Ascending aorta (tissue), 2 donors: ENCODE measurements at regions of chr20 and their contacts with region 1.

Region 1: DNA sequence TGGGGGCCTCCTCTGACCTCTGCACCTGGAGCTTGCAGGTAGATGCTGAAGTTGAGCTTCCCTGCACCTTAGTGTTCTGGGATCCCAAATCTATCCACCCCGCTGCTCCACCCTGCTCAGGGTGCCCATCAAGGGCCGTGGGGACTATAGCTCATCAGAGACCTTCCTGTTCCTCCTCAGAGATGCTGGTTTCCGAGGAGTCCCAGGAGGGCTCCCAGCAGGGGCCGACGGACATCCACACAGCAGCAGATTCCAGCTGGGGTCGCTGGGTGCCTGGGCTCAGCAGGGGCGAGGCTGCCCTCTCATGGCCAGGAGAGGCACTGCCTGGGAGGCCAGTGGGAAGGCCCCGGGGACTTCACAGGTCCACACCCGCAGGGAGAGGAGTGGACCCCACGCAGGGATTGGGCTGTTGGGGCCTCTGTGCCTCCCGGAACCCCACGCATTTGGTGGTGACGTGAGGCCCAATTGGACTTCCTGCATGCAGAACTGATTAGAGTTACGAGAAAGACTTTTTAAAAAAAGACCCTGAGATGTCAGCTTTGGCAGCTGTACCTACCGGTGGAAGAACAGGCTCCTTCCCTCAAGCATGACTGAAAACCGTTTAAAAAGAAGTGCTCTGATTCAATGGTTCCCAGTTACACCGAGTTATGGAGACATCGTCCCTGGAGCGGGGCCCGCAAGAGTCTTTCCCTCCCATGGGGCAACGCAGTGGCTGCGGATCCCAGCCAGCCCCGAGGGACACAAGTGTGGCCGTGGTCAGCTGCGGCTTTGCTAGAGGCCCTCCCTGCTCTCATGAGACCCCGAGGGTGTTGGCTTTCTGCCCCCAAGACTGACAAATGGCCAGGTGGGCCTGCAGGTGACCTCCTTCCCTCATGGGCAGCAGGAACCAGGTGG is 25.3 kb upstream of the SLCO4A1 start:
- DNase-seq: peak; percentile 57 to 83
- H3K4me3 ChIP-seq: no peak overlapping the region
- H3K27ac ChIP-seq: peak overlapping the region; percentile 58 to 68
- H3K4me1 ChIP-seq: no peaks in the 10 kb centered on the region
- H3K27me3 ChIP-seq: no peaks in the 10 kb centered on the region
- CTCF ChIP-seq: peak; percentile 83 to 96 (median 95)

Region 2: DNA sequence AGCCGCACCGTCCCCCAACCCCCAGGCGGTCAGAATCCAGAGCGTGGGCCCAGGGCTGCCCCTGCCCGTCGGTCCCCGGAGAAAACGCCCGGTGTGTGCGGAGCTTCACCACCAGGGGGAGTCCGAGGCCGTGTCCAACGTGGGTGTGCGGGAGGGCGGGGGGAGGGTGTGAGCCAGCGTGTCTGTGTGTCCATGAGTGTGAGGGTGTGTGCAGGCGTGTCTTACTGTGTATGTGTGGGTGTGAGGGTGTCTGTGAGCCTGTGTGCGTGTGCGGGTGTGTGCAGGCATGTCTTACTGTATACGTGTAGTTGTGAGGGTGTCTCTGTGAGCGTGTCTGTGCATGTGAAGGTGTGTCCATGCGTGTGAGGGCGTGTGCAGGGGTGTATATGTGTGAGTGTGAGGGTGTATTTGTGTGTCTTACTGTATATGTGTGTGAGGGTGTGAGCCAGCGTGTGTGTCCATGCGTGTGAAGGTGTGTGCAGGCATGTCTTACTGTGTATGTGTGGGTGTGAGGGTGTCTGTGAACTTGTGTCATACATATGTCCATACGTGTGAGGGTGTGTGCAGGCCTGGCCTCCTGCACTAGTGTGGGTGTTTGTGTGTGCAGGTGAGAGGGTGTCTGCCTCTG is 116.6 kb before region 1 on chr20:
- intact Hi-C with region 1: loop called (anchors 1 kb)
- DNase-seq: peak in 1 of 2 donors; percentile 80
- H3K4me3 ChIP-seq: no peak overlapping the region
- H3K27ac ChIP-seq: no peak overlapping the region
- H3K4me1 ChIP-seq: no peaks in the 10 kb centered on the region
- H3K27me3 ChIP-seq: peaks cover 4% of the 10 kb centered on the region
- CTCF ChIP-seq: peak; percentile 75 to 90 (median 90)

Region 3: DNA sequence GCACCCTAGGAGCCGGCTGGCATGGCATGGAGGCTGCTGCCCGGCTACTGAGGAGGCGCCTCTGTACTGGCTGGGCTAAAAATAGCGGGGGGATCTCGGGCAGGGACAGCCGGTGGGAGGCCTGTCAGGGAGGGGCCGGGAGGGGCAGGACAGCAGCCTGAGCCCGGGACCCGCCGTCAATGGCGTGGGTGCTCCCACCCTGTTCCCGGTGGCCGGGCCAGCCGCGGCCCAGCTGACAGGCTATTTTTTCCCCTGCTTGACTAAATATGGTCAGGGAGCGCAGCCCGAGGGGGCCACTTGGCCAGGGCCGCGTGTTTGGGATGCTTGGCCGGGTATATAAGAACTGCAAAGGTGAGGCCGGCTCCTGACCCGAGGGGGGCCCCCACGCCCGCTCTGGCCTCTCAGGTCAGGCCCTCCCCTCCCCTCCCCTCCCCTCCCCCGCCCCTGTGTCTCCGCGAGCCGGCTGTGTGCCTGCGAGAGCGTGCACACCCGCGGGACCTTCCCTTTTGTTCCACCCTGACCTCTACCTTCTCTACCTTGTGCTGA is 66.8 kb before region 1 on chr20:
- intact Hi-C with region 1: loop called (anchors 5 kb)
- DNase-seq: no peak
- H3K4me3 ChIP-seq: peak overlapping the region; percentile 51 to 86
- H3K27ac ChIP-seq: peak overlapping the region; percentile 60 to 72
- H3K4me1 ChIP-seq: peaks cover 8 to 22% of the 10 kb centered on the region in 2 donors
- H3K27me3 ChIP-seq: no peaks in the 10 kb centered on the region
- CTCF ChIP-seq: no peak

Region 4: GRCh38 chr20:62587757-62588402 is 29.1 kb before region 1 on chr20:
- intact Hi-C with region 1: no loop called
- DNase-seq: no peak
- H3K4me3 ChIP-seq: no peak overlapping the region
- H3K27ac ChIP-seq: no peak overlapping the region
- H3K4me1 ChIP-seq: no peaks in the 10 kb centered on the region
- H3K27me3 ChIP-seq: no peaks in the 10 kb centered on the region
- CTCF ChIP-seq: no peak